Endothelial cell of umbilical vein (primary cell): ENCODE measurements at regions of chrX and their contacts with region 1.

Region 1: GRCh38 chrX:139881572-139881971 is 51.3 kb downstream of the ATP11C start:
- DNase-seq: peak; percentile 85
- H3K4me3 ChIP-seq: peak overlapping the region in 1 of 3 experiments; percentile 30
- H3K27ac ChIP-seq: peak overlapping the region; percentile 88
- H3K4me1 ChIP-seq: peaks cover 43% of the 10 kb centered on the region
- H3K27me3 ChIP-seq: no peaks in the 10 kb centered on the region
- CTCF ChIP-seq: no peak
- POLR2A ChIP-seq: no peak

Region 2: DNA sequence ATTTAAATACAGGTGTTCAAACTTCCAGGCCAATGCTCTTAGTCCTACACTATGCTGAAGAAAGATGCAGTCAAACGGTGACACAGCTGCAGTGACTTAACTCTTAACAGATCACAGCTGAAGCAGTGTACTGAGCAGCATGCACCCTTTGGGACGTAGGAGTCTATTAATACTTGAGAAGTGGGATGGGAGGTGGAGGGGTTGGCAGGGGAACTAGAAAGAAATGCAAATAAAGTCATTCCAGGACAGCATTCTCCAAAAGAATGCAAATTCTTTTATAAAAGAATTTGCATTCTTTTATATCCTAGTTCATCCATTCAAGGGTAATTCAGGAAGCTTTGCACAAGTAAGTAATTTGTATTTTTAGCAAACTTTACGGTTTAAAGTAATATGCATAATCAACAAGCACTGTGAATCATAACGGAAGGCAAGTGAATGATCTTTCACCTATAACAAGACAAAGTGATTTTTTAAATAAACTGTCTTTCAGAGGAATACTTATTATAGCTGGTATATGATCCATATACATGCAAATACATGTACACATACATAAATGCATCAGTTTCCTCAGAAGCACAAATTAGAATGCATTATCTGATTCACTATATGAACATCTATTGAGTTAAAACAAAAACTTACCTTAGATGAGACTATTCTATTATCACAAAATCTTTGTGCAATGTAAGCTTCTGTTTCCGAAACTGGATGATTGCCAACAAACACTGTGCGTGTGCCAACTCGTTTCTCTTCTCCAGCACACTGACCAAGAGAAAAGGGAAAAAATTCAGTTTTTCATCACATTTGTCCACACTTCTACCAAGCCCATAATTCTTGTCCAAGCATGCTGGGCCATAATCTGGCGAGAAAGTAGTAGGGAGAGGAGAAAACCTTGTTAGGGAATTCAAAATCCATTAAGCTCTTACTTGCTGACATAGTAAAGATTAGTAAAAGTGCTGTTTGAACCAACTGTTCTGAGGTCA is 55.2 kb before region 1 on chrX:
- CTCF ChIA-PET with region 1: no interaction called
- POLR2A ChIA-PET with region 1: no interaction called
- dilution Hi-C with region 1: no loop called
- intact Hi-C with region 1: loop called (anchors 1 kb)
- DNase-seq: peak; percentile 66
- H3K4me3 ChIP-seq: no peak overlapping the region
- H3K27ac ChIP-seq: peak overlapping the region; percentile 26
- H3K4me1 ChIP-seq: peaks cover 25% of the 10 kb centered on the region
- H3K27me3 ChIP-seq: no peaks in the 10 kb centered on the region
- CTCF ChIP-seq: no peak
- POLR2A ChIP-seq: no peak

Region 3: GRCh38 chrX:139831675-139832456 is 49.7 kb before region 1 on chrX:
- CTCF ChIA-PET with region 1: no interaction called
- POLR2A ChIA-PET with region 1: no interaction called
- dilution Hi-C with region 1: no loop called
- intact Hi-C with region 1: loop called (anchors 2 kb)
- DNase-seq: peak; percentile 73
- H3K4me3 ChIP-seq: no peak overlapping the region
- H3K27ac ChIP-seq: no peak overlapping the region
- H3K4me1 ChIP-seq: peaks cover 26% of the 10 kb centered on the region
- H3K27me3 ChIP-seq: no peaks in the 10 kb centered on the region
- CTCF ChIP-seq: no peak
- POLR2A ChIP-seq: no peak

Region 4: GRCh38 chrX:139924069-139924695 is 42.6 kb after region 1 on chrX:
- CTCF ChIA-PET with region 1: interaction called, 4 read pairs
- POLR2A ChIA-PET with region 1: no interaction called
- dilution Hi-C with region 1: no loop called
- intact Hi-C with region 1: loop called (anchors 1 kb)
- DNase-seq: peak; percentile 52
- H3K4me3 ChIP-seq: no peak overlapping the region
- H3K27ac ChIP-seq: peak overlapping the region; percentile 65
- H3K4me1 ChIP-seq: peaks cover 29% of the 10 kb centered on the region
- H3K27me3 ChIP-seq: no peaks in the 10 kb centered on the region
- CTCF ChIP-seq: no peak
- POLR2A ChIP-seq: no peak

Region 5: GRCh38 chrX:139932901-139933796 is 51.6 kb after region 1 on chrX and contains the start of gene ATP11C:
- CTCF ChIA-PET with region 1: interaction called, 4 read pairs
- POLR2A ChIA-PET with region 1: interaction called, 3 read pairs
- dilution Hi-C with region 1: no loop called
- intact Hi-C with region 1: loop called (anchors 1 kb)
- DNase-seq: peak; percentile 82
- H3K4me3 ChIP-seq: peak within 1 kb of the TSS; percentile 83 to 88 (median 85)
- H3K27ac ChIP-seq: peak within 1 kb of the TSS; percentile 73
- H3K4me1 ChIP-seq: peaks cover 8% of the 10 kb centered on the region
- H3K27me3 ChIP-seq: no peaks in the 10 kb centered on the region
- CTCF ChIP-seq: peak in 1 of 2 donors; percentile 11
- POLR2A ChIP-seq: peak; percentile 84
- total RNA-seq, gene ATP11C: 29.5 and 31.8 TPM in 2 replicates